Sigmoid colon (tissue), 7 donors: ENCODE measurements at regions of chr4 and their contacts with region 1.

Region 1: GRCh38 chr4:76430519-76431388 is 4.3 kb upstream of the SHROOM3 start:
- DNase-seq: no peak
- H3K4me3 ChIP-seq: no peak overlapping the region
- H3K27ac ChIP-seq: no peak overlapping the region
- H3K4me1 ChIP-seq: peaks cover 0 to 7% (median 1%) of the 10 kb centered on the region in 4 donors
- H3K27me3 ChIP-seq: no peaks in the 10 kb centered on the region
- CTCF ChIP-seq: peak in 3 of 4 experiments; percentile 32 to 66 (median 46)
- EP300 ChIP-seq: no peak
- POLR2A ChIP-seq: no peak

Region 2: DNA sequence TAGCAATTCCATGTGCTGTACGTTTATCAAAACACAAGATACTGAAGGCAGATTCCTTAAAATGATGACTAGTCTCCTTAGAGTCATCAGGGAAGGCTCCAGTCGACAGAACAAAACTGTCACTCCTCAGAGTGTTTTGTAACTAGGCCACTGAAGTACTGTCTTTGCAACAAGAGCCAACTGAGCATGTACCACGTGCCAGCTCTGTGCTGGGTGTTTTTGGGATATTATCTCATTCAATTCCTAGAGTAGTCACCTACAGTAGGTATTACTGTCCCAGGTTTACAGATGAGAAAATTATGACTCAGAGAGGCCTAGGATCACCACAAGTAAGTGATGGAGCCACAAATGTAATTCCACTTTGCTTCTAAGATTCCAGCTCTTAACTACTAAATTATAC is 264.3 kb before region 1 on chr4:
- intact Hi-C with region 1: no loop called
- DNase-seq: no peak
- H3K4me3 ChIP-seq: no peak overlapping the region
- H3K27ac ChIP-seq: no peak overlapping the region
- H3K4me1 ChIP-seq: no peaks in the 10 kb centered on the region
- H3K27me3 ChIP-seq: no peaks in the 10 kb centered on the region
- CTCF ChIP-seq: no peak
- EP300 ChIP-seq: no peak
- POLR2A ChIP-seq: no peak

Region 3: GRCh38 chr4:76315267-76315918 is 115.4 kb before region 1 on chr4:
- intact Hi-C with region 1: no loop called
- DNase-seq: no peak
- H3K4me3 ChIP-seq: no peak overlapping the region
- H3K27ac ChIP-seq: no peak overlapping the region
- H3K4me1 ChIP-seq: peaks cover 0 to 4% (median 0%) of the 10 kb centered on the region in 4 donors
- H3K27me3 ChIP-seq: no peaks in the 10 kb centered on the region
- CTCF ChIP-seq: no peak
- EP300 ChIP-seq: no peak
- POLR2A ChIP-seq: no peak

Region 4: GRCh38 chr4:76504613-76505465 is 74.1 kb after region 1 on chr4:
- intact Hi-C with region 1: loop called (anchors 2 kb)
- DNase-seq: no peak
- H3K4me3 ChIP-seq: no peak overlapping the region
- H3K27ac ChIP-seq: no peak overlapping the region
- H3K4me1 ChIP-seq: no peaks in the 10 kb centered on the region
- H3K27me3 ChIP-seq: no peaks in the 10 kb centered on the region
- CTCF ChIP-seq: peak; percentile 15 to 74 (median 60)
- EP300 ChIP-seq: no peak
- POLR2A ChIP-seq: no peak

Region 5: DNA sequence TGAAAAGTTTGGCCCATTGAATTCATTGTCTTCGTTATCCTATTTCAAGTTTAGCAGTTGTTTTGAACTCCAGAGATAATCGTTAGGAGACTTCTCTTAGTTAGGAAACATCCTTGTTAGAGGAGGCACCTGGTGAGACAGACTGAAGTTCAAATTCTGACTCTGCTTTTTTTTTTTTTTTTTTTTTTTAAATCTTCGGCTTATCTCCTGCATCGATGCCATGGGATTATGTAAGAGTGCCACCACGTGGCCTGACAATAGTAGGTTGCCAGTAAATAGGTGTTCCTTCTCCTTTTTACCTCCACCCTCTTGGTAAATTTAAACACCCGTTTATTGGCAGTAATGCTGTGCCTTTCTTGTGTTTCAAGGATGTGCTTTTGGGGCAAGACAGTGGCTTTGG is 317.9 kb after region 1 on chr4:
- intact Hi-C with region 1: loop called (anchors 5 kb)
- DNase-seq: no peak
- H3K4me3 ChIP-seq: no peak overlapping the region
- H3K27ac ChIP-seq: no peak overlapping the region
- H3K4me1 ChIP-seq: peaks cover 0 to 41% (median 25%) of the 10 kb centered on the region in 4 donors
- H3K27me3 ChIP-seq: no peaks in the 10 kb centered on the region
- CTCF ChIP-seq: peak in 1 of 4 experiments; percentile 13
- EP300 ChIP-seq: no peak
- POLR2A ChIP-seq: no peak